GM12878 (cell line): ENCODE measurements at regions of chr3 and their contacts with region 1.

Region 1: GRCh38 chr3:123584988-123585937 is at the start of gene HACD2:
- DNase-seq: peak; percentile 90
- ATAC-seq: peak; percentile 95
- H3K4me3 ChIP-seq: peak within 1 kb of the TSS; percentile 86
- H3K27ac ChIP-seq: peak within 1 kb of the TSS; percentile 79
- H3K4me1 ChIP-seq: peaks cover 2% of the 10 kb centered on the region
- H3K27me3 ChIP-seq: no peaks in the 10 kb centered on the region
- CTCF ChIP-seq: no peak
- EP300 ChIP-seq: 0 out of 4 replicates have a peak, but pooled peaks of 1 of the 2 experiments have one; percentile 26
- POLR2A ChIP-seq: peak; percentile 87
- RAD21 ChIP-seq: no peak
- polyA plus RNA-seq, gene HACD2: 9.1 to 9.6 TPM

Region 2: GRCh38 chr3:123054931-123055330 is 530.3 kb before region 1 on chr3:
- CTCF ChIA-PET with region 1: no interaction called
- POLR2A ChIA-PET with region 1: no interaction called
- RAD21 ChIA-PET with region 1: no interaction called
- SMC1A ChIA-PET with region 1: no interaction called
- in situ Hi-C with region 1: no loop called
- intact Hi-C with region 1: no loop called
- DNase-seq: no peak
- ATAC-seq: no peak
- H3K4me3 ChIP-seq: no peak overlapping the region
- H3K27ac ChIP-seq: no peak overlapping the region
- H3K4me1 ChIP-seq: no peaks in the 10 kb centered on the region
- H3K27me3 ChIP-seq: peaks cover 2 to 3% of the 10 kb centered on the region in 2 experiments; a peak in 2 of 4 replicates
- CTCF ChIP-seq: no peak
- EP300 ChIP-seq: no peak
- POLR2A ChIP-seq: no peak
- RAD21 ChIP-seq: no peak

Region 3: GRCh38 chr3:123605789-123606234 is 20.5 kb after region 1 on chr3:
- CTCF ChIA-PET with region 1: interaction called, 4 read pairs
- POLR2A ChIA-PET with region 1: interaction called, 19 read pairs
- RAD21 ChIA-PET with region 1: interaction called, 6 read pairs
- SMC1A ChIA-PET with region 1: interaction called, 12 read pairs
- in situ Hi-C with region 1: no loop called
- intact Hi-C with region 1: no loop called
- DNase-seq: peak; percentile 55
- ATAC-seq: peak; percentile 88
- H3K4me3 ChIP-seq: no peak overlapping the region
- H3K27ac ChIP-seq: peak overlapping the region; percentile 22; the same call in 1 of the 2 replicates
- H3K4me1 ChIP-seq: peaks cover 23% of the 10 kb centered on the region
- H3K27me3 ChIP-seq: no peaks in the 10 kb centered on the region
- CTCF ChIP-seq: no peak
- EP300 ChIP-seq: no peak
- POLR2A ChIP-seq: no peak
- RAD21 ChIP-seq: no peak

Region 4: GRCh38 chr3:123766193-123767019 is 181.1 kb after region 1 on chr3:
- CTCF ChIA-PET with region 1: no interaction called
- POLR2A ChIA-PET with region 1: no interaction called
- RAD21 ChIA-PET with region 1: no interaction called
- SMC1A ChIA-PET with region 1: no interaction called
- in situ Hi-C with region 1: no loop called
- intact Hi-C with region 1: no loop called
- DNase-seq: no peak
- ATAC-seq: no peak
- H3K4me3 ChIP-seq: no peak overlapping the region
- H3K27ac ChIP-seq: no peak overlapping the region
- H3K4me1 ChIP-seq: no peaks in the 10 kb centered on the region
- H3K27me3 ChIP-seq: no peaks in the 10 kb centered on the region; a peak in 1 of 4 replicates
- CTCF ChIP-seq: no peak
- EP300 ChIP-seq: no peak
- POLR2A ChIP-seq: no peak
- RAD21 ChIP-seq: no peak